Activated T-helper 1 cell treated with anti-CD3 and anti-CD28 coated beads, Interleukin-12 subunit alpha, Interleukin-12 subunit beta, Interleukin-2, Interleukin-4 antibody, amounts not matched to agents 30 ng/mL and 10 ng/mL and 1 ng/mL, durations not matched to agents 14 hours and 24 hours and 36 hours (primary cell): ENCODE measurements at regions of chr15 and their contacts with region 1.

Region 1: GRCh38 chr15:39756806-39757522 is 25.7 kb downstream of the FSIP1 start:
- DNase-seq: no peak
- H3K4me3 Mint-ChIP-seq: no peak overlapping the region
- H3K27ac Mint-ChIP-seq: no peak overlapping the region
- H3K4me1 Mint-ChIP-seq: no peaks in the 10 kb centered on the region
- H3K27me3 Mint-ChIP-seq: peaks cover 44% of the 10 kb centered on the region

Region 2: DNA sequence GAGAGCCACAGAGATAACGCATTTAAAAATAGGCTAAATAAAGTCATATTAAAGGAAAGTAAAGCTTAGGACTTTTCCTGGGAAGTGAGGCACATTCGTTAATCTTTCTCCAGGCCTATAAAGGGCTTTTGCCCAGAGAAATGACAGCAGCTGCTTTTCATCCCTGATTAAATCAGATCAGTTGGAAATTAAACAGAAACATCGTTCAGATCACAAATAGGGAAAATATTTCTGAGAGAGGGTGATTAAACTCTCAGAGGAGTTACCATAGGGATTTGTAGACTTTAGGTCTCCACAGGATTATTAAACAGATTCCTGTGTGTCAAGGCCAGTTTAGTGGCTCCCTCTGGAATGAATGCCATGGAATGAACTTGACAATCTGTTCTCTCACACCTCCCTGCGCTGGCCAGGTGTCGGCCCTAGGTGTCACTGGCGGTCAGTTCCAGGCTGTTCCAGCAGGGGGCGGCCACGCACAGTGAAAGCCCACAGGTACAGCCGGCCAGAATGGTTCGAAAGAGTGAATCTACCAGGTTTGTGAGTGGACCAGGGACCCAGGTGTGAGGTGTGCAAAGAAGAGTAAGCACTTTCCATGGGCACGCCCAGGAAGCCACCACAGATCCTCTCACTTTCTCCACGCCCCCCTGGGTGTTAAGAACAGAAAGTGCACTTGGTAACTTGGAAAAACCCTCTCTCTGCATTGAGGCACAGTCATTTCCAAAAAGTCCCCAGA is 939.4 kb before region 1 on chr15:
- intact Hi-C with region 1: loop called (anchors 1 kb)
- DNase-seq: peak; percentile 66
- H3K4me3 Mint-ChIP-seq: no peak overlapping the region
- H3K27ac Mint-ChIP-seq: no peak overlapping the region
- H3K4me1 Mint-ChIP-seq: peaks cover 4% of the 10 kb centered on the region
- H3K27me3 Mint-ChIP-seq: peaks cover 14% of the 10 kb centered on the region

Region 3: DNA sequence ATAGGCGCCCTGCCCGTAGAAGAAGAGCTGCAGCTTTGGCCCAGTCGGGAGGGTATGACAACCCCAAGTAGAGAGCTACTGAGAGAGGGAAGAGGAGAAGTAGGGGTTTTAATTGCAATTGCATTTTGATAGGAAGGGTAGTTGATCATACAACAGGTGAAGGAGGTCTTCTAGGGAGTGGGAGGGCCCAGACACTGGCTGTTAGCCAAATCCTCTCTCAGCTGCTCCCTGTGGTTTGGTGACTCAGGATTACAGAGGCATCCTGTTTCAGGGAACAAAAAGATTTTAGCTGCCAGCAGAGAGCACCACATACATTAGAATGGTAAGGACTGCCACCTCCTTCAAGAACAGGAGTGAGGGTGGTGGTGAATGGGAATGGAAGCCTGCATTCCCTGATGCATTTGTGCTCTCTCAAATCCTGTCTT is 585.0 kb before region 1 on chr15:
- intact Hi-C with region 1: loop called (anchors 2 kb)
- DNase-seq: no peak
- H3K4me3 Mint-ChIP-seq: no peak overlapping the region
- H3K27ac Mint-ChIP-seq: no peak overlapping the region
- H3K4me1 Mint-ChIP-seq: no peaks in the 10 kb centered on the region
- H3K27me3 Mint-ChIP-seq: peaks cover 14% of the 10 kb centered on the region

Region 4: GRCh38 chr15:39686000-39686613 is 70.9 kb before region 1 on chr15:
- intact Hi-C with region 1: loop called (anchors 1 kb)
- DNase-seq: no peak
- H3K4me3 Mint-ChIP-seq: no peak overlapping the region
- H3K27ac Mint-ChIP-seq: no peak overlapping the region
- H3K4me1 Mint-ChIP-seq: peaks cover 13% of the 10 kb centered on the region
- H3K27me3 Mint-ChIP-seq: peaks cover 14% of the 10 kb centered on the region